Endothelial cell of umbilical vein (primary cell): ENCODE measurements at regions of chr6 and their contacts with region 1.

Region 1: DNA sequence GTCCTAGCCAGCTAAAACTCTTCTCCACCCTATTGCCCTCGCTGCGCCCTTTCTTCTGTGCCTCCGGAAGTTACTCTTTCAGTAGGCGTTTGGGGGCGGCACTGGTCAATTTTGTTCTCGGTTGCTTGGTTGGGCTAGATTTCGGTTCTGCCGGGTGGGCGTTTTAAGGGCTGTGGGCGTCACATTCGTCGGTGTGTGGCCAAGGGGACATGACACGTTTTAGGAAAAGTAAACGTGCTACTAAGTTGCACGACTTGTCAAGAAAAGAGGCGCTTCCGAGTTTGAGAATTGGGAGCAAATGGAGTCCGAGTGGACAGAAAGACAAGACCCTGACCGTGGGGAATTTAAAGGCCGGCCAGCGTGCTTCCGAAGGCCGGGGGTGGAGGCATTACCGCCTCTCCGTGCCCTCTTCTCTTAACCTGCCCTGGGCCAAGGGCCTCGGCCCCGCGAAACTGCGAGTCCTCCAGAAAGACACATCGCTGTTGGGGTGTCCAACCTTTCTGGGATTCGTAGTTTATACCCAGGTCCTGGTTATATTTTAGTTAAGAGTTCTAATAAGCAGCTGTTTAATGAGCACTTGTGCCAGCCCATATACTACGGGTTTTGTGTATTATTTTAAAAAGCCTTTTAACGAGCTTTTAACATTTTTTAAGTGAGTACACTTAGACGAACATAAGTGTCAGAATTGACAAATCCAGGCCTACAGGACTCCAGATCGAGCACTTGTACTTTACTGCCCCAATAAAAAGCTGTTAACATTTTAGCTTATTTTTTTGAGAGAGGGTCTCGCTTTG is 661 bp upstream of the BAG6 start:
- DNase-seq: no peak
- H3K4me3 ChIP-seq: peak overlapping the region; percentile 23 to 80 (median 62)
- H3K27ac ChIP-seq: peak overlapping the region; percentile 83
- H3K4me1 ChIP-seq: peaks cover 23% of the 10 kb centered on the region
- H3K27me3 ChIP-seq: no peaks in the 10 kb centered on the region
- CTCF ChIP-seq: no peak
- POLR2A ChIP-seq: no peak

Region 2: GRCh38 chr6:31441365-31442267 is 211.5 kb before region 1 on chr6:
- CTCF ChIA-PET with region 1: no interaction called
- POLR2A ChIA-PET with region 1: no interaction called
- dilution Hi-C with region 1: no loop called
- intact Hi-C with region 1: no loop called
- DNase-seq: peak; percentile 56
- H3K4me3 ChIP-seq: no peak overlapping the region
- H3K27ac ChIP-seq: no peak overlapping the region
- H3K4me1 ChIP-seq: no peaks in the 10 kb centered on the region
- H3K27me3 ChIP-seq: peaks cover 22 to 40% of the 10 kb centered on the region in 2 experiments
- CTCF ChIP-seq: peak; percentile 85 to 90
- POLR2A ChIP-seq: no peak

Region 3: DNA sequence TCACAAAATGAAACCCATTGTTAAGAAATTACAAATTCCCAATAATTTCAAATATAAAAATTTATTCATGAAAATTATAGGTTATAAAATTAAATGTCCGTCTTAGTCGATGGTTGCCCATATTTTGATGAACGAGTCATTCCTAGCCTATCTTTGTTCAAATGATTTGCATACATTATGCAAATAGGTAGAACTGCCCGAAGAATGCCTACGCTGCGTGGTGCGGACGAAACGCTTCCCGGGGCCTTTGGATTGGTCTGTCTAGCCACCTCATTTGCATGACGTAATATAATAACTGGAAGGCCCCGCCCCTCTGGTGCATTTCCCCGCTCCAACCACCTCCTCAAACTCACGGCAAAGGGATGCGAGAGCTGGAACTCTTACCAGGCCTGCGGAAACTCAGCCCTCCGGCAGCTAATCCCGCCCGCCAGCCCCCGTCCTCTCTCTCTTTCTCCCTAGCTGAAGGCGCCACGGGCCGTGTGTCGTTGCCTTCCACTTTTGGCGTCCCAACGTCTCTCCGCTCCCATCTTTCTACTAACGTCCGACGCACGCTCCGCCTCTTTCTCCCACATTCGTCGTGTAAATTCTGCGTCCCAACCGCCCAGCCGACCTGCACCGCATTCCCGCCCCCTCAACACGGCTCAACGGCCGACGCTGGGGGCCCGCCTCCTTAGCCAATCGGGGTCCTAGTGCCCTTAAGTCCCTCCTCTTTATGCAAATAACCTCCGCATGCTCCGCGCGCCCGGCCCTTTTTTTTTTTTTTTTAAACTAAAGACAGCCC is 33.1 kb before region 1 on chr6:
- CTCF ChIA-PET with region 1: interaction called, 3 read pairs
- POLR2A ChIA-PET with region 1: interaction called, 3 read pairs
- dilution Hi-C with region 1: no loop called
- intact Hi-C with region 1: loop called (anchors 1 kb)
- DNase-seq: peak; percentile 100
- H3K4me3 ChIP-seq: peak overlapping the region in 2 of 3 experiments; percentile 57 to 80
- H3K27ac ChIP-seq: peak overlapping the region; percentile 95
- H3K4me1 ChIP-seq: peaks cover 13% of the 10 kb centered on the region
- H3K27me3 ChIP-seq: no peaks in the 10 kb centered on the region
- CTCF ChIP-seq: no peak
- POLR2A ChIP-seq: peak; percentile 73

Region 4: GRCh38 chr6:31639449-31639861 is 13.7 kb before region 1 on chr6:
- CTCF ChIA-PET with region 1: interaction called, 4 read pairs
- POLR2A ChIA-PET with region 1: interaction called, 10 read pairs
- dilution Hi-C with region 1: no loop called
- intact Hi-C with region 1: no loop called
- DNase-seq: no peak
- H3K4me3 ChIP-seq: no peak overlapping the region
- H3K27ac ChIP-seq: no peak overlapping the region
- H3K4me1 ChIP-seq: no peaks in the 10 kb centered on the region
- H3K27me3 ChIP-seq: no peaks in the 10 kb centered on the region
- CTCF ChIP-seq: no peak
- POLR2A ChIP-seq: no peak

Region 5: GRCh38 chr6:31665501-31666336 is 12.6 kb after region 1 on chr6 and contains the start of gene CSNK2B:
- CTCF ChIA-PET with region 1: interaction called, 38 read pairs
- POLR2A ChIA-PET with region 1: interaction called, 13 read pairs
- dilution Hi-C with region 1: no loop called
- intact Hi-C with region 1: loop called (anchors 1 kb)
- DNase-seq: peak; percentile 97
- H3K4me3 ChIP-seq: peak within 1 kb of the TSS; percentile 70 to 94 (median 72)
- H3K27ac ChIP-seq: peak within 1 kb of the TSS; percentile 77
- H3K4me1 ChIP-seq: peaks cover 28% of the 10 kb centered on the region
- H3K27me3 ChIP-seq: no peaks in the 10 kb centered on the region
- CTCF ChIP-seq: peak in 1 of 2 donors; percentile 13
- POLR2A ChIP-seq: peak; percentile 54
- total RNA-seq, gene CSNK2B: 206 and 214 TPM in 2 replicates

Region 6: DNA sequence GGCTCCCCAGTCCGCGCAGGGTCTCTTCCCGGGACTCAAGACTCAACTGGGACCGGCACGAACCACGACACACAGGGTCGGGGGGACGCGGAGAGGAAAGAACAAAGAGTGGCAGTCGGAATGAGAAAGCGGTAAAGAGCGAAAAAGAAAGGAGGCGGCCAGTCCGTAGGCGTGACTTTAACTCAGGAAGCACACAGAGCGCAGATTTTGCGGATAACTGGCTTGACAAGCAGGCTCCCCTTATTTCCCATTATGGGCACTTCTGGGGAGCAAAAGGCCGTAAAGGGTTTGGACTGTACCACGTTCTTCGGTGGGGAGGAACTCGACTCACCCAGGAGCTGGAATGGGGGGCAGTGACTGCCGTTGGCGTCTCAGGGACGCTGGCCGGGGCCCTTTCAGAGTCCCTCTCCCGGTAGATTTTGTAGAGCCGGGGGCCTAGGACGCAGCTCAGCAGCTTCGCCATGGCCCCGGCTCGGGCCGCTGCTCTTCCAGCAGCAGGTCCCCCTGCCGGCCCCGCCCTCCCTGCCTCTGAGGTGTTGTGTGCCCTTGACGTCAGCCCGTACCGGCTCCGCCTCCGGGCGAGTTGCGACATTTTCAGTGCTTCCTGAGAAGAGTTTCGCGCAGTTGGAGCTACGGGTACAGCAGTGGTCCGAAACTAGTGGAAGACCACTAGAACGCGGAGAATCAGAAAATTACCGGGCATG is 49.8 kb after region 1 on chr6 and contains the start of gene ABHD16A:
- CTCF ChIA-PET with region 1: no interaction called
- POLR2A ChIA-PET with region 1: no interaction called
- dilution Hi-C with region 1: no loop called
- intact Hi-C with region 1: loop called (anchors 1 kb)
- DNase-seq: peak; percentile 99
- H3K4me3 ChIP-seq: peak within 1 kb of the TSS; percentile 59 to 80 (median 74)
- H3K27ac ChIP-seq: peak within 1 kb of the TSS; percentile 77
- H3K4me1 ChIP-seq: peaks cover 11% of the 10 kb centered on the region
- H3K27me3 ChIP-seq: no peaks in the 10 kb centered on the region
- CTCF ChIP-seq: peak in 1 of 2 donors; percentile 3
- POLR2A ChIP-seq: peak; percentile 97
- total RNA-seq, gene ABHD16A: 41.3 and 48.9 TPM in 2 replicates

Region 7: DNA sequence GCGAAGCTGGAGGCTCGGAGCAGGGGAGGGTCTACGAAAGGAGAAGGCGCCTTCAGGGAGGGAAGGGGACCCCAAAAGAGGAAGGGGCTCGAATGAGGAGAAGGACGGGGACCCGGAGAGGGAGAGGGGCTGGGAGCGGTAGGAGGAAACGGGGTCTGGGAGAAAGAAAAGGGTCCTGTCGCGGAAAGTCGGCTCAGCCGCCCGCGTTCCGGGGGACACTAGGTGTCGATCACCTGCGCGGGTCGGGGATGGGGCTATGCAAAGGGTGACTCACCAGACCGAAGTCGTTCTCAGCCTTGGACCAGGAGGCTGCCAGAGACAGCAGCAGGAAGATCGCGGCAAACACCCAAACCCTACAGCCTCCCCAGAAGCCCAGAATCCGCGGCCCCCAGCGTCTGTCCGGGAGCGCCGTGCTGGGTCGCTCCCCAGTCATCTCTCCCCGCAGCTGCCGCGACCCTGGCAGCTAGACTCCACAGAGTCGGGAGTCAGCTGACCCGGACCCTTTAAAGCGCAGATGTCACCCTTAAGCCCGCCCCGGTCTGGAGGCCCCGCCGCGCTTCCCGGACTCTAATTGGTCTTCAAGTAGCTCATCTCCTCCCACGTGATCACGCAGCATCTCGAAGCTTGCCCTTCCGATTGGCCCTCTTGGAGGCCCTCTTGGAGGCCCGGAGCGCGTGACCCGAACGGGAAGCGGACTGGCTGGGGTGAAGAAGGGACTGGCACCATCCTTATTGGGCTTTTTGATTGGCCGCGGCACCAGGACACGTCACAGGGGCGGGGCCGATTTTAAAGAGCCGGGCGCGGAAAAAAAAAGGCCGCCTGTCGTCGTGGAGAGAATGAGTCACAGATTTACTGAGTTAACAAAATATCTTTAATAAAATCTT is 209.5 kb after region 1 on chr6 and contains the start of gene NEU1:
- CTCF ChIA-PET with region 1: no interaction called
- POLR2A ChIA-PET with region 1: no interaction called
- dilution Hi-C with region 1: no loop called
- intact Hi-C with region 1: loop called (anchors 1 kb)
- DNase-seq: peak; percentile 100
- H3K4me3 ChIP-seq: peak within 1 kb of the TSS; percentile 71 to 88 (median 83)
- H3K27ac ChIP-seq: peak within 1 kb of the TSS; percentile 77
- H3K4me1 ChIP-seq: peaks cover 7% of the 10 kb centered on the region
- H3K27me3 ChIP-seq: no peaks in the 10 kb centered on the region
- CTCF ChIP-seq: no peak
- POLR2A ChIP-seq: peak; percentile 99
- total RNA-seq, gene NEU1: 61.3 and 62.8 TPM in 2 replicates

Region 8: GRCh38 chr6:31933537-31933936 is 280.4 kb after region 1 on chr6:
- CTCF ChIA-PET with region 1: no interaction called
- POLR2A ChIA-PET with region 1: no interaction called
- dilution Hi-C with region 1: no loop called
- intact Hi-C with region 1: no loop called
- DNase-seq: no peak
- H3K4me3 ChIP-seq: no peak overlapping the region
- H3K27ac ChIP-seq: no peak overlapping the region
- H3K4me1 ChIP-seq: no peaks in the 10 kb centered on the region
- H3K27me3 ChIP-seq: peaks cover under 1% of the 10 kb centered on the region in 2 experiments
- CTCF ChIP-seq: no peak
- POLR2A ChIP-seq: no peak